ENCODE measurements at regions of chr10 and their contacts with region 1.

Region 1: DNA sequence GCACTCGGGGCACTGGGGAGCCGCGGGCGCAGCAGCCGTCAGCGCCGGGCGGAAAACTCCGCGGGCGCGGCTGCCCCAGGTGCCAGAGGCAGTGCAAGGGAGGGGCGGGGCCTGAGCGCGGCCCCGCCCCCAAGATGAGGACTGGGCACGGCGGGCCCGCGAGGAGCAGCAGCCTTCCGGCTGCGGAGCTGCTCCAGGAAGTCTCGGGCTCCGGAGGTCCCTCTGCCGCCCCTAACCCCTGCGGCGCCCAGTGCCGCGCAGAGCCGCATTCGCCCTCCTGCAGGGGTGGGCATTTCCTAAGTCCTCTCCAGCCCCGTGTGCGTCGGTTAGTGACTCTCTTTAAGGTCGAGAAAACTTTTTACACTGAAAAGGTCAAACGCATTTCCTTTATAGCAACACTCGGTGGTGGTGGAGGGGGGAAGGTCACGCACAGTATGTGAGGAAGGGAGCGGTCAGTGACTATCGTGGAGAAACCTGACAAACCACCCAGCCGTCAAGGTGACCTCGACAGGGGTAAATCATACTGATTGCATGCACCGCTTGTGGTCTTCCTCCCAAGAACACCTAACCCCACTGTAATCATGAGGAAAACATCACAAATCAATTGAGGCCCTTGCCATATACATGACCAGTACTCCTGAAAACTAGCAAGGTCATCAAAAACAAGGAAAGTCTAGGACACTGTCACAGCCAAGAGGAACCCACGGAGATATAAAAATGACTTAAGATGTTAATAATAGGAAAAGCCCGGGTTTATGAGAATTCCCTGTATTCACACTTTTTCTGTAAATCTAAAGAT is at the start of gene ANXA11:
- DNase-seq: peak; percentile 75
- ATAC-seq: peak; percentile 84
- H3K4me3 ChIP-seq: peak within 1 kb of the TSS; percentile 74
- H3K27ac ChIP-seq: peak within 1 kb of the TSS; percentile 93
- H3K4me1 ChIP-seq: peaks cover 55% of the 10 kb centered on the region
- H3K27me3 ChIP-seq: no peaks in the 10 kb centered on the region
- CTCF ChIP-seq: no peak
- total RNA-seq, gene ANXA11: 241 TPM

Region 2: GRCh38 chr10:80144067-80144695 is 61.5 kb before region 1 on chr10:
- CTCF ChIA-PET with region 1: no interaction called
- POLR2A ChIA-PET with region 1: no interaction called
- in situ Hi-C with region 1: no loop called
- intact Hi-C with region 1: no loop called
- DNase-seq: no peak
- ATAC-seq: peak; percentile 78
- H3K4me3 ChIP-seq: peak overlapping the region; percentile 36 to 62
- H3K27ac ChIP-seq: no peak overlapping the region
- H3K4me1 ChIP-seq: peaks cover 7% of the 10 kb centered on the region
- H3K27me3 ChIP-seq: peaks cover 2% of the 10 kb centered on the region; the same call in 1 of the 2 replicates
- CTCF ChIP-seq: peak; percentile 63; the same call in 1 of the 2 replicates

Region 3: GRCh38 chr10:80168679-80169380 is 36.8 kb before region 1 on chr10:
- CTCF ChIA-PET with region 1: no interaction called
- POLR2A ChIA-PET with region 1: no interaction called
- in situ Hi-C with region 1: no loop called
- intact Hi-C with region 1: loop called (anchors 5 kb)
- DNase-seq: no peak
- ATAC-seq: 0 out of 2 replicates have a peak, but pooled peaks have one; percentile 12
- H3K4me3 ChIP-seq: no peak overlapping the region
- H3K27ac ChIP-seq: no peak overlapping the region
- H3K4me1 ChIP-seq: peaks cover 5% of the 10 kb centered on the region
- H3K27me3 ChIP-seq: no peaks in the 10 kb centered on the region
- CTCF ChIP-seq: no peak; the same call in 1 of the 2 replicates

Region 4: DNA sequence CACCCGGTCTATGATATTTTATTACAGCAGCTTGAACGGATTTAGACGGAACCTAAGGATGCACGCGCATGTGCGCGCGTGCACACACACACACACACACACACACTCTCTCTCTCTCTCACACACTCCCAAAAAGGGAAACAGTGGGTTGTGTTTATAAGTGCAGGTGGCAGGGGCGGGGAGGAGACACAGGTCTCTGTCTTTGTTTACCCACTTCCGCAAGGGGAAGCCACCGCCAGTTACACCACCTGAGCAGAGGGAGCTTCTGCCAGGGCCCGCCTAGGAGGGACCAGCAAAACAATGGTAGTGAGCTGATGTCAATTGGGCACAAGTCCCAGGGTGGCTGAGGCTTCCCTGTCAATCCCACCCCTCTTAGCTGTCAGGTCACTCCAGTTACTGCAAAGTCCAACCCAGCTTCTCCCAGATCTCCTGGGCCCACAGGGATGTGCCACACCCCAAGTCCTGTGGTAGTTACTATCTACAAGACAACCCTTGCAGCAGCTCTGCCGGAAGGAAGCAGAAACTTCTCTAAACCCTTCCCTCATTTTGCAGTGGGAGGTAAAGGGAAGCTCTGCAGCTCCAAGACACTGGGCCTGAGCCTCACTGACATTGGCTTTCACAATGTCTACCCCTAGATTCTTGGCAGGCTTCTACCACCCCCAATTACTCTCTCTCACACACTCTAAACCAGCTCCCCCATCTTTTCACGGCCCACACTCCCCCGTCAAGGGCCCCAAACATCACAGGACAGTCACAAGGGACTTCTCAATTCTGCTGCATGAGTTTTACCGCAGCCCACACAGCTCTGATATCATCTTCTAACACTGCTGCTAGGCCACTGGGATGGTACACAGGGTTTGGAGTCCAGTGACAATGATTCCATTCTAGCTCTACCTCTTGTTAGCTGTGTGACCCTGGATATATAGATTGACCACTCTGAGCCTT is 17.9 kb before region 1 on chr10:
- CTCF ChIA-PET with region 1: interaction called, 3 read pairs
- POLR2A ChIA-PET with region 1: interaction called, 13 read pairs
- in situ Hi-C with region 1: no loop called
- intact Hi-C with region 1: no loop called
- DNase-seq: no peak
- ATAC-seq: no peak
- H3K4me3 ChIP-seq: no peak overlapping the region
- H3K27ac ChIP-seq: no peak overlapping the region
- H3K4me1 ChIP-seq: peaks cover 6% of the 10 kb centered on the region; the same call in 1 of the 2 replicates
- H3K27me3 ChIP-seq: no peaks in the 10 kb centered on the region
- CTCF ChIP-seq: no peak